ENCODE measurements at regions of chr16 and their contacts with region 1.

Region 1: DNA sequence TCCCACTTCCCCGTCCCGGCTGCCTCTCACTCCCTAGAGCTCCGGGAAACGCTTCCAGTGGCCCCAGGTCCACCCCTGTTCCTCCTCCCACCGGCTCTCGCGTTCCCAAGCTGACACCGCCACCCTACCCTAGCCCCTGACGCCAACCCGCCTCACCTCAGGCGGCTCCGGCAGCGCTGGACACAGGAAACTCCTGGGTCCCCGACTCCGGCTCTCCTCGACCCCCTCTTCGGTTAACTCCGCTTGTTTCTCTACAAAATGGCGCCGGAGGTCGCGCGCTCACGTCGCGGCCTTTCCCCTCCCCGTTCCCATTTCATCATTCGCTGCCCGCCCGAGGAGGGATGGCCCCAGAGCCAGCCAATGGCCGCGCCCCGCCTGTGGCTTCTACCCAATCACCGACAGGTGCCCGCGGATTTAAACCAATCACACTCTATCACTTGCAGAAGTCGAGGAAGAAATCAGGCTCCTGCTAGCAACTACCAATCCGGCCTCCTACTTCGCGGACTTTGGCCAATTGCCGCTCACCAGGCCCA is at the start of gene CNOT1:
- DNase-seq: peak; percentile 98
- ATAC-seq: peak; percentile 95
- total RNA-seq, gene CNOT1: 70.2 TPM

Region 2: DNA sequence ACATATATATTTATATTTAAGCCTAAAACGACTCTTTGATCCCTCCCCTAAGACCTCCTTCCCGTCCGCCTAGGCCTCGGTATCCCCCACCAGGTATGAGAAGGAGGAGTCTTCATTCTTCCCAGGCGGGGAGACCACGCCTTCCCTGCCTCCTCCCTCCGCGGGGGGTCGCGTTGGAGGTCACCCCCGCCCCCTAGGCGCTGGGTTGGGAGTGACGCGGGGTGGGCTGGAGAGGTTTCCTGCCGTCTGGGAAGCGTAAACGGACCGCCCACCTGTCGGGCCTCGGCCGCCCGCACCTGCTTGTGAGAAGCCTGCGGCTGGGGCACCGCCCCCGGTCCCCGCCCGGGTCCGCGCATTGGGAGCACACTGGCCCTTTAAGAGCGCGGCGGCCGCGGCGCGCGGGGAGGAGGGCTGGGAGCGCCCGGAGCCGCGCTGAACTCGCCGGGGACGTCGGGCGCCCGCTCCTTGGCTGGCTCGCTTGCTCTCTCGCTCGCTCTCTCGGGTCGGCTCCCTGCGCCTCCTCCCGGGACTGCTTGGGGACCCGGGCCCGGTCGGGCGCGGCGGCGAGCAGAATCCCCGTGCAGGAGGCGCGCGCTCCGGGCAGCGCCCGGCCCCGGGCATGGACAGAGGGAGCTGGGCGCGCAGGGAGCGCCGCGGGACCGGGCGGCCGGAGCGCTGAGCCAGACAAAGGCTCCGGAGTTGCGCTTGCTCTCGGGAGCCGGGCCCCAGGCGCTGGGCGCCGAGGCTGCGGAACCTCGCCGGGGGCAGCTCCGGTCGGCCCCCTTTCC is 604.1 kb before region 1 on chr16 and contains the start of gene MMP15:
- intact Hi-C with region 1: loop called (anchors 10 kb)
- DNase-seq: peak; percentile 87
- ATAC-seq: peak; percentile 69
- total RNA-seq, gene MMP15: 70.3 TPM

Region 3: DNA sequence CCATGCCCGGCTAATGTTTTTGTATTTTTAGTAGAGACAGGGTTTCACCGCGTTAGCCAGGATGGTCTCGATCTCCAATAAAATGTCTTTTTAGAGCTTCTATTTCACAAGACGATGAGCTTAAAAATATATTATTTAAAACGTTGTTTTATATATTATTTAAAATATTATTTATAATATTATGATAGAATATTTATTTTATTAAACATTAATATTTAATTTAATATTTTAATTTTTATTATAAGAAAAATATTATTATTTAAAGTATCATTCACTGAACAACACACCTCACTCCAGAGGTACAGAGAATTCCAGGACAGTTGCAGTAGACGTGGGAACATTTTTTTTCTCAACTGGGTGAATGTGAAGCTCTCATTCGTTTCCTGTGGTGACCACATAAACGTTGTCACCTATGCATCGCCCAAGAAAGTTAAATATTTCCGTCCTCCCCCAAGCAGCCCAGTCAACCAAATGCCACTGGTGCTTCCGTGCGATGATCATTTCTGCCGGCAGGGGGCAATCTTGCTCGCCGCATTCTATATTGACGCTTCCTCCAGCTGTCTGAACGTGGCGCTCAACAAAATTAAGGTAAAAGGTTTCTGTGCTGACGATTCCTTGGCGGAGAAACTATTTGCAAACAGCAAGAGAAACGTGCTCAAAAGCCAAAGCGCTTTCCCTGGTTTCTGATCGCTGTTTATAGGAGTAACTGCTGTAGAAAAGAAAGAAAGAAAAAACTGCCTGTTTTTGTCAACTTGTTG is 293.1 kb before region 1 on chr16:
- intact Hi-C with region 1: loop called (anchors 5 kb)
- DNase-seq: peak; percentile 84
- ATAC-seq: peak; percentile 66

Region 4: DNA sequence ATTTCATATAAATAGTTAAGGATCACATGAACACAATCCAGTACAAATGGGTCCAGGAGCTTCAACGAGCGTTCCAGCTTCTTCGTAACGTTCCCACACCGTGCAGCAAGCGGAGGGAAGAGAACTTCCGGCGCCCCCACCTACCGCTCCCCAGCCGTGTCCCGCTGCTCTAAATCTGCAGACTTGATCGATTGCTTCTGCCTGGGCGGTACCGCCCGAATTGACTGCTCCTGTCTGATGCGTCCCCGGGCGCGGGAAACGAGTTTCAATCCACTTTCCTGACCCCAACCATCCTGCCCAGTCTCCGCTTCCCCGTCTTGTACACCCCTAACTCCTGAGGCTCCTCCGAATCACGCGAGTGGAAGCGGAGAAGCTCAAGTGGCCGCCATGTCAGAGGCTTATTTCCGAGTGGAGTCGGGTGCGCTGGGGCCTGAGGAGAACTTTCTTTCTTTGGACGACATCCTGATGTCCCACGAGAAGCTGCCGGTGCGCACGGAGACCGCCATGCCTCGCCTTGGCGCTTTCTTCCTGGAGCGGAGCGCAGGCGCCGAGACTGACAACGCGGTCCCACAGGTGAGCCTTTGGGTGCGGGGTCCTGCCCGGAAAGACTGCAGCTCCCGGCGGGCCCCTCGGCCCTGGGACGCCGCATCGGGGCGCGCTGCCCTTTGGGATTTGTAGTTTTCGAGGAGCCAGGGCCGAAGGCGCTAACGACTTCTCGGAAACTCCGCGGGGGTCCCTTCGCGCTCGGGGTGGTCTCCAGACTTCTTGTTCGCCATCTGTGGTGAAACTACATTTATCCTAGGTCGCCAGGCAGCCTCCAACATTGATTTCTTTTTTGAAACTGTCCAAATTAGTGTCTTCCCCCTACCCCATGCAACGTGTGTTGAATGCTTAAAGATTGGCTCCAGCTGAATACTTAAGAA is 237.2 kb before region 1 on chr16 and contains the start of gene GINS3:
- intact Hi-C with region 1: loop called (anchors 10 kb)
- DNase-seq: peak; percentile 91
- ATAC-seq: peak; percentile 97
- total RNA-seq, gene GINS3: 6.5 TPM

Region 5: DNA sequence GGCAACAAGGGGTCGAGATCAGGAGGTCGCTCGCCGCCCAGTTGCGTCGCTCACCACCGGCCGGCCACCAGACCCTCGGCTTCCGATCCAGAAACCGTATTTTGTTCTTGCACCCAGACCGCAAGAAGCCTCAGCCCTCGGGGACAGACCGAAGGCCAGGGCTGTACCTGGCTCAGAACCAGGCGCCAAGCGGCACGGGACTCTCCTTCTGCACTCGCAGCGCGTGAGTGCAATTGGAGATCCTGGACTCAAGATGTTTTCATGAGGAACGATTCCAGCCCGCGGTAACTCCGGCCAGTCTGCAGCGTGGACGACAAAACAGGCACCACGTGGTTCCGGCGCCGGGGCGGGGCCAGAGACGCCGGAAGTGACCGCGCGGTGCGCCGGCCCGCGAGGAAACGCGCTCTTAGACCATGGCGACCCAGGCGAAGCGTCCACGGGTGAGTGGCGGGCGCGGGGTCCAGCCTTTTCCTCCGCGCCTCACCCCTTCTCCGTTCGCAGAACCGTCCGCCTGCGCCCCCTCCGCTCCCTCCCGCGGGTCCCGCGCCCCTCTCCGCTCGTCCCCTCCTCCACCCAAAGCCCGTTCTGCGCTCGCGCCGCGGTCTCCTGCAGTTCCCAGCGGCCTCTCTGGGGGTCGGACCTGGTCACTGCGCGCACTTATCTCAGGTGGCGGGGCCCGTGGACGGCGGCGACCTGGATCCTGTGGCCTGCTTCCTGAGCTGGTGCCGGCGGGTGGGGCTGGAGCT is 114.3 kb before region 1 on chr16 and contains the start of gene SETD6:
- intact Hi-C with region 1: loop called (anchors 10 kb)
- DNase-seq: peak; percentile 93
- ATAC-seq: peak; percentile 96
- total RNA-seq, gene SETD6: 13.0 TPM

Region 6: GRCh38 chr16:58533751-58534470 is 95.7 kb before region 1 on chr16:
- intact Hi-C with region 1: loop called (anchors 5 kb)
- DNase-seq: no peak
- ATAC-seq: peak; percentile 84

Region 7: GRCh38 chr16:58556678-58557077 is 73.0 kb before region 1 on chr16:
- intact Hi-C with region 1: no loop called
- DNase-seq: no peak
- ATAC-seq: no peak

Region 8: DNA sequence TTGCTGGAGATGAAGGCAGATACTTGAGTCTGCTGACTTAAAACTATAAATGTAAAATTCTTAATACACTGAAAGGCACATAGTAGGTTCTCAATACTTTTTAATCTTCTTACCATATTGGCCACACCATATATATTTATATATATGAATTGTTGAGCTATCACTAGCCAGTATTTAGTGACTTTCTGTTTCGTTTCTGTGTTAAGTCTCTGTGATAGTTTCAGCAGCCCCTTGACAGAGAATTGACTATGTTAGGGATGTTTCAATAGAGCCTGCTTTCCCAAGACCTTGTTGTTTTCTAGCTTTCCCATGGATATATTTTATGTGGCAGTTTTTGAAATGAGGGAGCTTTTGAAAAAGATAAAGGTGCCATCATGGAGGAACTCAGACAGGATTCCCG is 311.0 kb after region 1 on chr16:
- intact Hi-C with region 1: no loop called
- DNase-seq: no peak
- ATAC-seq: no peak